Colonic mucosa (tissue), 4 donors: ENCODE measurements at regions of chr22 and their contacts with region 1.

Region 1: DNA sequence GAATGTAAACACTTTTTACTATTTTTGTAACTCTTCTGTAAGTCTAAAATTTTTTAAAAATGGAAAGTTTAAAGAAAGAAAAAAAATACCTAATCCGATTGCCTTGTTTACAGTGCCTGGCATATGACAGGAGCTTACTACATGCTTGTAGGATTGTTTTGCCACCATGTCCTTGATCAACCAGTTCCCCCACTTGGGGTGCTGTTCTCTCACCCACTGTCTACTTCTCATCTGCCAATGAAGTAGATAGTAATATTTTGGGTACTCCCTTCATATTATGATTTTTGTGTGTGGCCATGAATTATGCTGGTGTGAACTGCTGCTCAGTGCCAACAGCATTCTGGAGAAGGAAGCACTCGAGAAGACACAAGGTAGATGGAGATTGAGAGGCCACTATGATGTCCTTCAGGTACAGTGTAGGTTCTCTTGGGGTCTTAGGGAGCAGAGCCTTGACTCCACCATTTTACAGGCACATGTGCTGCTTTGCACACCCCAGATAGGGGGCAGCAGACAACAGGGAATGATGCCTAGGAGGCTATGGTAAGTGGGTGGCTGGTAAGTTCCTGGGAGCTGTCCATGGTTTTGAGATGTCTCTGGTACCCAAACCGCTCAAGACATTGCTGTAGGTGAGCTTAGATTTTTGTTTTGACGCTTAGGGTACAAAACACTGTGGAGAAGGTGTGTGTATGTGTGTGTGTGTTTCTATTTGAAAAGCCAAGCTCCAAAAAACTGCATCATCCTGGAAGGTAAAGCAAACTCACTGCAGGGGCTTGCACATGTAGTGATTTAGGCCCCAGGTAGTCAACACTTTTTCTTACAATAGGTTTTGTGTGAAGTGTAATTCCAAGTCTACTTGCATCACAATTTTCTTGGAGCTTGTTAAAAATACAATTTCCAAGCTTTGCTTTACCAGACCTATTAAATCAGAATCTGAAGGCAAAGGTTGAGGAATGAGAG is 494.5 kb upstream of the LARGE1 start:
- DNase-seq: peak; percentile 62
- H3K4me3 ChIP-seq: no peak overlapping the region
- H3K27ac ChIP-seq: no peak overlapping the region
- H3K4me1 ChIP-seq: no peaks in the 10 kb centered on the region
- H3K27me3 ChIP-seq: no peaks in the 10 kb centered on the region
- CTCF ChIP-seq: peak; percentile 35

Region 2: DNA sequence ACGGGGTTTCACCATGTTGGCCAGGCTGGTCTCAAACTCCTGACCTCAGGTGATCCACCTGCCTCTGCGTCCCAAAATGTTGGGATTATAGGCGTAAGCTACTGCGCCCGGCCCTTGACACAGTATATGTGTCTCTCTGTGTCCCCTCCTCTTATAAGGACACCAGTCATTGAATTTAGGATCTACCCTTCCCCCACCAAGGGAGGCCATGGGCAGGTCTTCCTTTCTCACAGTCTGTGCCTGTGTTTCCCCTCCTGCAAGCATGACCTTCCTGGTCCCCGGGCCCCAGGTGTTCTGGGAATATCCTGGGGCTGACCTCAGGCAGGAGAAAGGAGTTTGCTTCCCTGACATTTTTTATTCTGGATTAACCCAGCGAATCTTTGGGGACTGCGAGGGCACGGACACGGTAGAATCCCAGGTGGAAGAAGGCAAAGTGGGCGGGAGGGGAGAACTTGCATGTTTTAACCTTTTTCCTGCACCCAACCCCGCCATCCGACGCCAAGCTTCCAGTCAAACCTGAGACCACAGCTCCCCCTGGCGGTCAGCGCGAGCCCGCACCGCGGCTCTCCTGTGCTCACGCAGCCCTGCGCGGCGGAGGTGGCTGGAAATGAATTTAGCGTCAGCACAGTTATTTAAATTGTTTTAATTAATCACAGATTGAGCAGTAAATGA is 609.1 kb after region 1 on chr22:
- intact Hi-C with region 1: loop called (anchors 2 kb)
- DNase-seq: peak; percentile 87
- H3K4me3 ChIP-seq: no peak overlapping the region
- H3K27ac ChIP-seq: no peak overlapping the region
- H3K4me1 ChIP-seq: no peaks in the 10 kb centered on the region
- H3K27me3 ChIP-seq: no peaks in the 10 kb centered on the region
- CTCF ChIP-seq: peak; percentile 88

Region 3: GRCh38 chr22:35150183-35151107 is 735.7 kb after region 1 on chr22:
- intact Hi-C with region 1: loop called (anchors 5 kb)
- DNase-seq: peak; percentile 77
- H3K4me3 ChIP-seq: no peak overlapping the region
- H3K27ac ChIP-seq: no peak overlapping the region
- H3K4me1 ChIP-seq: no peaks in the 10 kb centered on the region
- H3K27me3 ChIP-seq: no peaks in the 10 kb centered on the region
- CTCF ChIP-seq: peak; percentile 73